HepG2 (cell line): ENCODE measurements at regions of chr16 and their contacts with region 1.

Region 1: GRCh38 chr16:84186685-84187437 is at the start of gene TAF1C:
- DNase-seq: peak; percentile 92
- ATAC-seq: peak; percentile 93
- H3K4me3 ChIP-seq: peak within 1 kb of the TSS; percentile 86 to 100 (median 99)
- H3K27ac ChIP-seq: peak within 1 kb of the TSS; percentile 55
- H3K4me1 ChIP-seq: peaks cover 14% of the 10 kb centered on the region
- H3K27me3 ChIP-seq: no peaks in the 10 kb centered on the region
- CTCF ChIP-seq: peak; percentile 99
- EP300 ChIP-seq: 0 out of 4 replicates have a peak, but pooled peaks of 1 of the 2 experiments have one; percentile 24
- POLR2A ChIP-seq: peak; percentile 67 to 89
- RAD21 ChIP-seq: peak; percentile 92
- total RNA-seq, gene TAF1C: 8.3 and 15.6 TPM in 2 replicates

Region 2: GRCh38 chr16:84084570-84085270 is 102.1 kb before region 1 on chr16:
- CTCF ChIA-PET with region 1: interaction called, 13 read pairs
- POLR2A ChIA-PET with region 1: no interaction called
- in situ Hi-C with region 1: no loop called
- intact Hi-C with region 1: loop called (anchors 1 kb)
- DNase-seq: peak; percentile 78
- ATAC-seq: peak; percentile 96
- H3K4me3 ChIP-seq: no peak overlapping the region
- H3K27ac ChIP-seq: no peak overlapping the region
- H3K4me1 ChIP-seq: no peaks in the 10 kb centered on the region
- H3K27me3 ChIP-seq: no peaks in the 10 kb centered on the region
- CTCF ChIP-seq: peak; percentile 97
- EP300 ChIP-seq: no peak
- POLR2A ChIP-seq: 0 out of 4 replicates have a peak, but pooled peaks of 1 of the 2 experiments have one; percentile 17
- RAD21 ChIP-seq: peak; percentile 89

Region 3: GRCh38 chr16:84116720-84117493 is 70.0 kb before region 1 on chr16 and contains the start of gene MBTPS1:
- CTCF ChIA-PET with region 1: no interaction called
- POLR2A ChIA-PET with region 1: interaction called, 12 read pairs
- in situ Hi-C with region 1: no loop called
- intact Hi-C with region 1: no loop called
- DNase-seq: peak; percentile 97
- ATAC-seq: peak; percentile 96
- H3K4me3 ChIP-seq: peak within 1 kb of the TSS; percentile 92 to 99 (median 93)
- H3K27ac ChIP-seq: peak within 1 kb of the TSS; percentile 85
- H3K4me1 ChIP-seq: peaks cover 30% of the 10 kb centered on the region
- H3K27me3 ChIP-seq: peaks cover 0 to 3% of the 10 kb centered on the region in 2 experiments; a peak in 1 of 5 replicates
- CTCF ChIP-seq: peak; percentile 32
- EP300 ChIP-seq: no peak; a peak in 1 of 4 replicates
- POLR2A ChIP-seq: peak; percentile 92 to 95
- RAD21 ChIP-seq: peak; percentile 37
- total RNA-seq, gene MBTPS1: 42.0 and 56.7 TPM in 2 replicates

Region 4: DNA sequence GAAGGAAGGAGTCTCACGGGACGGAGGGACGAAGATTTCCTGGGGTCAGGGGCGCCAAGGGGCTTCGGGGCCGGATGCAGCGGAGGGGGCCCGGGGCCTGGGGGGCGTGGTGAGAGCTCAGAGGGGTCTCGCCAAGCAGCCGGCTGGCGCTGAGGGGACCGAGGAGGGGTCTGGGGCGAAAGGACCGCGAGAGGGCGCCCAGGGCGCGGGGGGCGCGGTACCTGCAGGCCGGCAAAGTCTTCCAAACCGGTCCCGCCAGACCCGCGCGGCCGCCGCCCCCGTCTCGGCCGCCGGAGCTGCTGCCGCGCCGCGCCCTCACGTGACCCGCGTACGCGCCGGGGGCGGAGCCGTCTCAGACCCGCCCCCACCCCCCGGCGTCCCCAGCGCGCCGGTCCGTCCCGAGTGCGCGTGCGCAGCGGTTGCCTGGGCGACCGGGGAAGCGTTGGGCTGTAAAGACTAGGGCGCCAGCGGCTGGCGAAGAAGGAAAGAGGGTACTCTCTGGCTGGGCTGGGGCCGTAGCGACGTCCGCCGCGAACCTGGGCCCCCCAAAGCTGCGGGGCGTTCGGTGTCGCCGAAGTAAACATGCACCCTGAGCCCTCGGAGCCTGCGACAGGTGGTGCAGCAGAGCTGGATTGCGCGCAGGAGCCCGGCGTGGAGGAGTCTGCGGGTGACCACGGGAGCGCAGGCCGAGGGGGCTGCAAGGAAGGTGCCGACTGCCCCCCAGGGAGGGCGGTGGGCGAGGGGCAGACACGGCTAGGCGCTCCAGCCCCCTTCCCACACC is 41.8 kb before region 1 on chr16 and contains the starts of genes DNAAF1 and HSDL1:
- CTCF ChIA-PET with region 1: no interaction called
- POLR2A ChIA-PET with region 1: no interaction called
- in situ Hi-C with region 1: no loop called
- intact Hi-C with region 1: loop called (anchors 1 kb)
- DNase-seq: peak; percentile 83
- ATAC-seq: peak; percentile 74
- H3K4me3 ChIP-seq: peak within 1 kb of the TSS; percentile 90 to 100 (median 92)
- H3K27ac ChIP-seq: peak within 1 kb of the TSS; percentile 55
- H3K4me1 ChIP-seq: peaks cover 39% of the 10 kb centered on the region
- H3K27me3 ChIP-seq: peaks cover 2 to 10% of the 10 kb centered on the region in 2 experiments
- CTCF ChIP-seq: peak; percentile 31
- EP300 ChIP-seq: peak in 1 of 2 experiments; percentile 11; a peak in 1 of 4 replicates
- POLR2A ChIP-seq: peak; percentile 55 to 80
- RAD21 ChIP-seq: peak; percentile 56
- total RNA-seq, gene DNAAF1: 0.04 TPM in 1 of 2 replicates, not detected in the other
- total RNA-seq, gene HSDL1: 41.0 and 49.7 TPM in 2 replicates

Region 5: DNA sequence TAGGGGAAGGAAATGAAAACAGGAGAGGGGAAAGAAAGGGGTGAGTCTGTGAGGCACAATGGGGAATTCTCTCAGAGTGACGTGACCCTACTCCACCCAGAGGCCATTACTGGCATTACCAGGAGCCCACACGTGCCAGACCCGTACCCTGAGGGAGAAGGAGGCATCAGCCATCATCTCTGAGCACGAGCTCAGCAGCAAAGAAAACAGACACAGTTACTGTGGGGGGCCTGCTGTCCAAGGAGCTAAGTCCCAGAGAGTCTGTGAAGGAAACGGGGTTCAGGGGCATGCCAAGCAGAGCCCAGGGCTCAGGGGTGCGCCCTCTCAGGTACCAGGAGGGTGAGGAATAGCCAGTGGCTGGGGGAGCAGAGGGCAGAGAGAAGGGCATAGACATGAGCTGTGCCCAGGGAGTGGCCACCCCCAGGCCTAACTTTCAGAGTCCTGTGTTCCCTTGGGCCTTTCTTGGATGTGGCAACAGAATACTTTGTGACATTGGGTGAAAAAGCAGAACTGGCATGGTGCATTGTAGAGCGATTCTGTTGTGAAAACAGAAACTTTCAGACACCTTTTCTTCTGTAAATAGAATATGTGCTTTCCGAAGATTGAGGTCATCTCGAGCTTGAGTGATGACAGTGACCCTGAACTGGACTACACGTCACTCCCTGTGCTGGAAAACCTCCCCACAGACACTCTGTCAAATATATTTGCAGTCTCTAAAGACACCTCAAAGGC is 11.3 kb before region 1 on chr16:
- CTCF ChIA-PET with region 1: no interaction called
- POLR2A ChIA-PET with region 1: interaction called, 18 read pairs
- in situ Hi-C with region 1: no loop called
- intact Hi-C with region 1: no loop called
- DNase-seq: peak; percentile 65
- ATAC-seq: peak; percentile 80
- H3K4me3 ChIP-seq: peak overlapping the region in 1 of 3 experiments; percentile 61; a peak in 1 of 6 replicates
- H3K27ac ChIP-seq: no peak overlapping the region
- H3K4me1 ChIP-seq: peaks cover 37% of the 10 kb centered on the region
- H3K27me3 ChIP-seq: peaks cover 1 to 6% of the 10 kb centered on the region in 2 experiments; a peak in 3 of 5 replicates
- CTCF ChIP-seq: peak; percentile 94
- EP300 ChIP-seq: no peak
- POLR2A ChIP-seq: no peak
- RAD21 ChIP-seq: peak; percentile 79